ENCODE measurements at regions of chr6 and their contacts with region 1.

Region 1: GRCh38 chr6:151323791-151324487 is 67.4 kb downstream of the ZBTB2 start:
- DNase-seq: peak; percentile 84
- H3K4me3 Mint-ChIP-seq: peak overlapping the region; percentile 18
- H3K27ac Mint-ChIP-seq: no peak overlapping the region
- H3K4me1 Mint-ChIP-seq: peaks cover 18% of the 10 kb centered on the region
- H3K27me3 Mint-ChIP-seq: peaks cover 42% of the 10 kb centered on the region

Region 2: GRCh38 chr6:150263765-150264404 is 1060.1 kb before region 1 on chr6:
- CTCF ChIA-PET with region 1: no interaction called
- intact Hi-C with region 1: no loop called
- DNase-seq: peak; percentile 65
- H3K4me3 Mint-ChIP-seq: no peak overlapping the region
- H3K27ac Mint-ChIP-seq: no peak overlapping the region
- H3K4me1 Mint-ChIP-seq: no peaks in the 10 kb centered on the region
- H3K27me3 Mint-ChIP-seq: no peaks in the 10 kb centered on the region

Region 3: DNA sequence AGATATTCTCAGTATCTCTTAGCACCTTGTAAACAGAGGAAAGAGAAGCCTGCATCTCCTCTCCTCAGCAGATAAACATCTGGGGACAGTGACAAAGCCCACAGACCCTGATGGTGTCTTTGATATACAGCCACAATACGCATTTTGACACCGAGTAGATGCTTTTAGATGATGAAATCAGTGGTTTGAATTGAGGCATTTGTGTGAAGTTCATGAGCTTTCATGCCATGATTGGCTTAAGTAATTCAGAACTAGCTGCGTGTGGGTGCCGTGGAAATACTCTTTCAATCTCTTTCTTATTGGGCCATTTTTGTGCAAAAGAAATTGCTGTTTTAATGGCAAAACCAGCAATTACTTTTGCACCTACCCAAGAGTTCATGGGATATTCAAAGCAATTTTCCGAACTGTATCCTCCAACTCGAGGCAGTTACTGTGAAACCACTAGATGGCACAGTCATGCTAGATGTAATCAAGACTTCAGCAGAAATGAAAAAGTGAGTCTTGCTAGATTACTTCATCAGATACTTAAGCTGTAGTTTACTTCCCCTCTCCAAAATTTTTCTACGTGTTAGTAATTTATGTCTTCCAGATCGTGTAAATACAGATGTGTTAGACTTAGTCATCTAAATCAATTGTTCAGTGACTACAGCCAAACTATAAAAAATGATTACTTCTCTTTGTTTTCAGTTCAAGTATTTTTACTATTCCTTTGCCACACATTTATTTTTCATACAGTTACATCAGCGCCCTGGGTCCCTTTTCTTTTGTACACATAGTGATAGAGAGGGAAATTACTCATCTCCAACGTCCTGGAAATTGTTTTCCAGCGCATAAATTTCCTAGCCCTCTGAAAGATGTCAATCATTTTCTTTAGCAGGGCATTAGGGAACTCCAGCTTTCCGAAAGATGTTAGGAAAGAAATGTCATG is 905.8 kb before region 1 on chr6:
- CTCF ChIA-PET with region 1: no interaction called
- intact Hi-C with region 1: loop called (anchors 2 kb)
- DNase-seq: peak; percentile 52
- H3K4me3 Mint-ChIP-seq: peak overlapping the region; percentile 59
- H3K27ac Mint-ChIP-seq: peak overlapping the region; percentile 72
- H3K4me1 Mint-ChIP-seq: peaks cover 24% of the 10 kb centered on the region
- H3K27me3 Mint-ChIP-seq: peaks cover 15% of the 10 kb centered on the region

Region 4: GRCh38 chr6:150711584-150712504 is 612.1 kb before region 1 on chr6:
- CTCF ChIA-PET with region 1: no interaction called
- intact Hi-C with region 1: no loop called
- DNase-seq: no peak
- H3K4me3 Mint-ChIP-seq: no peak overlapping the region
- H3K27ac Mint-ChIP-seq: no peak overlapping the region
- H3K4me1 Mint-ChIP-seq: no peaks in the 10 kb centered on the region
- H3K27me3 Mint-ChIP-seq: peaks cover 4% of the 10 kb centered on the region

Region 5: DNA sequence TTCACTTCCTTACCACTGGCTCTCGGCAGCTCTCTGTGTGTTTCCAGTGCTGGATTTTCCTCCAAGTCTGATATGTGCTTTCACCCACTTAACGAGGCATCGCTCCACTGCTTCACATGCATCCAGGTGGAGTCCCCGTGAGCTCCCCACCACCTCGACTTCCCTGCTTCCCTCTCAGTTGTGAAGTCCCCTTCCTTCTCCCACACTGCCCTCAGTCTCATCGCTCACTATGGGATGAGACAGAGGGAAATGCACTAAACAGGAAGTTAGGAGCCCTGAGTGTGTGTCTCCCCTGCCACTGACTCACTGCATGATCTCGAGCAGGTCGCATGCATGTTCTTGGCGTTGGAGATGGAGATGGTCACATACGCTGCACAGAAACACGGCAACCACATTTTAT is 374.4 kb before region 1 on chr6:
- CTCF ChIA-PET with region 1: no interaction called
- intact Hi-C with region 1: no loop called
- DNase-seq: no peak
- H3K4me3 Mint-ChIP-seq: no peak overlapping the region
- H3K27ac Mint-ChIP-seq: no peak overlapping the region
- H3K4me1 Mint-ChIP-seq: no peaks in the 10 kb centered on the region
- H3K27me3 Mint-ChIP-seq: no peaks in the 10 kb centered on the region

Region 6: DNA sequence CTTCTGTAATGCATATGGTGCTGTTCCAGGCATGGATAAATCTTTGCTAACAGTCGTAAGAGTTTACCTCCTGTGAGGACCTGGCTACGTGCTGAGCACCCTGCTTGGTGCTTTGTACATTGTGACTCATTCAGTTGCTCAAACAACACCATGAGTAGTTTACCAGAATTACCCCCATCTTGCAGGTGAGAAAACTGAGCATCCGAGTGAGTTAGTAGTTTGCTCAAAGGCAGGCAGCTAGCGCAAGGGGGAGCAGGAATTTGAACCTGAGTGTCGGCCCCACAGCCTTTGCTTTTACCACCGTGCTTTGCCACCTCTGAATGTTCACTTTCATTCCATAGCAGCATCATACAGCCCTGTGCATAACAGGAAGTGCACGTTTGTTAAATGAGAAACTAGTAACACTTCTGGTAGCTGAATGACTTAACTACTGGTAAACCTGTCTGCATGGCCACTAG is 336.5 kb before region 1 on chr6:
- CTCF ChIA-PET with region 1: interaction called, 3 read pairs
- intact Hi-C with region 1: loop called (anchors 1 kb)
- DNase-seq: peak; percentile 79
- H3K4me3 Mint-ChIP-seq: no peak overlapping the region
- H3K27ac Mint-ChIP-seq: peak overlapping the region; percentile 90
- H3K4me1 Mint-ChIP-seq: peaks cover 7% of the 10 kb centered on the region
- H3K27me3 Mint-ChIP-seq: no peaks in the 10 kb centered on the region

Region 7: GRCh38 chr6:151025076-151025475 is 298.9 kb before region 1 on chr6:
- CTCF ChIA-PET with region 1: interaction called, 18 read pairs
- intact Hi-C with region 1: no loop called
- DNase-seq: no peak
- H3K4me3 Mint-ChIP-seq: no peak overlapping the region
- H3K27ac Mint-ChIP-seq: no peak overlapping the region
- H3K4me1 Mint-ChIP-seq: no peaks in the 10 kb centered on the region
- H3K27me3 Mint-ChIP-seq: no peaks in the 10 kb centered on the region

Region 8: DNA sequence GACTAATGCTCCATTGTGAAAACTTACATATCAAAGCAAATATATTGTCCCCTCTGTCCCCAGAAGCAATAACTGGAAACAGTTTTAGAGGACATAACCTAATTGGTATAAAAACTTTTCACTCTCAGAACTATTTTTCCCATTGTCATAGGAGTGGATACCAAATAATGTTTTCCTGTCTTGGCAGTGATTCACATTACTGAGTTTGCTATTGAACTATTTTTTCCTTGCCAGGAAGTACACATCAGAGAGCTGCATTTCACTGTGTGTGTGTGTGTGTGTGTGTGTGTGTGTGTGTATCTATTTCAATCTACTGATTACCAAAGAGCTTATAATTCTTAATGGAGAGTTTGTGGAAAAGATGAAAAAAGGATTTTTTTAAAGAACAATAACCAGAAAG is 38.8 kb before region 1 on chr6:
- CTCF ChIA-PET with region 1: interaction called, 4 read pairs
- intact Hi-C with region 1: loop called (anchors 2 kb)
- DNase-seq: no peak
- H3K4me3 Mint-ChIP-seq: no peak overlapping the region
- H3K27ac Mint-ChIP-seq: peak overlapping the region; percentile 3
- H3K4me1 Mint-ChIP-seq: peaks cover 33% of the 10 kb centered on the region
- H3K27me3 Mint-ChIP-seq: peaks cover 5% of the 10 kb centered on the region